Panc1 (cell line): ENCODE measurements at regions of chr7 and their contacts with region 1.

Region 1: GRCh38 chr7:105707967-105708762 is 126.9 kb upstream of the EFCAB10 start:
- DNase-seq: no peak
- ATAC-seq: no peak
- H3K4me3 ChIP-seq: no peak overlapping the region
- H3K27ac ChIP-seq: no peak overlapping the region
- H3K4me1 ChIP-seq: no peaks in the 10 kb centered on the region
- H3K27me3 ChIP-seq: no peaks in the 10 kb centered on the region
- CTCF ChIP-seq: no peak

Region 2: GRCh38 chr7:105731042-105731441 is 22.9 kb after region 1 on chr7:
- CTCF ChIA-PET with region 1: no interaction called
- POLR2A ChIA-PET with region 1: interaction called, 12 read pairs
- in situ Hi-C with region 1: no loop called
- intact Hi-C with region 1: no loop called
- DNase-seq: no peak
- ATAC-seq: no peak
- H3K4me3 ChIP-seq: no peak overlapping the region
- H3K27ac ChIP-seq: no peak overlapping the region
- H3K4me1 ChIP-seq: no peaks in the 10 kb centered on the region
- H3K27me3 ChIP-seq: no peaks in the 10 kb centered on the region
- CTCF ChIP-seq: no peak